ENCODE measurements at regions of chr17 and their contacts with region 1.

Region 1: GRCh38 chr17:7856883-7857723 is at the start of gene NAA38:
- DNase-seq: peak; percentile 89 to 98 (median 97)
- H3K4me3 ChIP-seq: peak within 1 kb of the TSS; percentile 79
- H3K4me3 Mint-ChIP-seq: no peak within 1 kb of the TSS
- H3K27ac ChIP-seq: peak within 1 kb of the TSS; percentile 81
- H3K27ac Mint-ChIP-seq: no peak within 1 kb of the TSS
- H3K4me1 ChIP-seq: peaks cover 24% of the 10 kb centered on the region
- H3K4me1 Mint-ChIP-seq: peaks cover 5 to 7% (median 5%) of the 10 kb centered on the region in 3 donors
- H3K27me3 ChIP-seq: no peaks in the 10 kb centered on the region
- H3K27me3 Mint-ChIP-seq: no peaks in the 10 kb centered on the region
- total RNA-seq, gene NAA38: 58.2 to 65.0 TPM

Region 2: DNA sequence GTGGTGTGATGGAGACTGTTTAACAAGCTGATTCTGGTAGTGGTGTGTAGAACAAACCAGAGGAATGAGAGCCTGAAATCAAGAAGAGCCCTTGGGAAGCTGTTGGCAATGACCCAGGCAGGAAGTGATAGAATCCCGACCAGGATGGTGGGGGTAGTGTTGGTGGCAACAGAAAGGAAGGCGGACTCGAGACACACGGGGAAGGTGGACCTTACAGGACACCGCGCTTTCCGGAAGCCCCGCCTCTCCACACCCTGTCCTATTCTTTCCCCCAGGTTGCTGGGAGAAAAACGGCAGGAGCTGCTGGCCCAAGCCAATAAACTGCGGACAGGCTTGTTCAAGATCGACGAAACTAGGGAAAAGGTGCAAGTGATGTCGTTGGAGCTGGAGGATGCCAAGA is 53.1 kb before region 1 on chr17:
- CTCF ChIA-PET with region 1: no interaction called
- POLR2A ChIA-PET with region 1: no interaction called
- DNase-seq: no peak
- H3K4me3 ChIP-seq: no peak overlapping the region
- H3K4me3 Mint-ChIP-seq: no peak overlapping the region
- H3K27ac ChIP-seq: no peak overlapping the region
- H3K27ac Mint-ChIP-seq: no peak overlapping the region
- H3K4me1 ChIP-seq: no peaks in the 10 kb centered on the region
- H3K4me1 Mint-ChIP-seq: no peaks in the 10 kb centered on the region
- H3K27me3 ChIP-seq: no peaks in the 10 kb centered on the region
- H3K27me3 Mint-ChIP-seq: peaks cover 29 to 43% of the 10 kb centered on the region in 2 donors

Region 3: DNA sequence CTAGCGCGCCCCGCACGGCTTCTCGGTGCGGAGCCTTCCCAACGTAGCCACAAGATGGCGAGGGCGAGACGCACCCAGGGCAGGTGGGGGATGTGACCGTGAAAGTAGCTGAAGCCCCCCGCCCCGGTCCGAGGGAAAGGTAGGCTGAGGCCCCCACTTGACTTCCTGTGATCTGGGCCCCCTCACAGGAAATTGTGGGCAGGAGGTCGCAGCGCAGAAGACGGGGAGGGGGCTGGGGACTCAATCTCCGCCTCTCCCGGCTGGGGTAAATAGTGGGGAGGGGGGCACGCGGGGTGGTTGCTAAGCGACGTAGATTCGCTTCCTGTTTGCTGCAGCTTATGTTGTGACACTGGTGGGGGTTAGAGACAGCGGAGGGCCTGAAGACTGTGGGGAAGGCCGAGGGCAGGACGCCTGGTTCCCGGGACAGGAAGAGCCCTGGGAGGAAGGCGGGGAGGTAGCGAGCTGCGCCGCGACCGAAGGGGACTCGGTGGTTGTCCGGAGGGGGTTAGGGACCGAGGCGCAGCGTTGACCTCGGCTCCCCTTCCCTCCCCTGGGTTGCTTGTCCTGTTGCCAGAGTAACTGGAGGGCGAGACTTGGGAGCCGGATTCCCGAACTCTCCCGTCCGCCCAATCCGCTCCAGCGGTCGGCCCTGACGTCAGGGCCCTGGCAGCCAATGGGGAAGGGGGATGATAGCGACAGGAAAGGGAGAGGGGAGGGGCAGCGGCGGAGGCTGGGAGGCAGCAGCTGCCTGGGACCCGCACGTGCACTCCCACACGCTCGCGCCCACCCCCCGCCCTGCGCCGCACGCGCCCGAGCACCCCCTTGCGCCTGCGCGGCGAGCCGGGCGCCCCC is 21.9 kb before region 1 on chr17:
- CTCF ChIA-PET with region 1: interaction called, 28 read pairs
- POLR2A ChIA-PET with region 1: interaction called, 46 read pairs
- DNase-seq: peak; percentile 88 to 96 (median 90)
- H3K4me3 ChIP-seq: peak overlapping the region; percentile 86
- H3K4me3 Mint-ChIP-seq: peak overlapping the region; percentile 90 to 100 (median 95)
- H3K27ac ChIP-seq: peak overlapping the region; percentile 98
- H3K27ac Mint-ChIP-seq: peak overlapping the region; percentile 99 to 100 (median 99)
- H3K4me1 ChIP-seq: peaks cover 44% of the 10 kb centered on the region
- H3K4me1 Mint-ChIP-seq: peaks cover 46 to 53% (median 48%) of the 10 kb centered on the region in 3 donors
- H3K27me3 ChIP-seq: peaks cover 5% of the 10 kb centered on the region
- H3K27me3 Mint-ChIP-seq: peaks cover 9% of the 10 kb centered on the region in 2 donors

Region 4: GRCh38 chr17:7844292-7845154 is 12.6 kb before region 1 on chr17:
- CTCF ChIA-PET with region 1: interaction called, 5 read pairs
- POLR2A ChIA-PET with region 1: interaction called, 15 read pairs
- DNase-seq: peak; percentile 75 to 88 (median 82)
- H3K4me3 ChIP-seq: peak overlapping the region; percentile 86
- H3K4me3 Mint-ChIP-seq: peak overlapping the region; percentile 84 to 99 (median 97)
- H3K27ac ChIP-seq: peak overlapping the region; percentile 99
- H3K27ac Mint-ChIP-seq: peak overlapping the region; percentile 97 to 100 (median 100)
- H3K4me1 ChIP-seq: peaks cover 35% of the 10 kb centered on the region
- H3K4me1 Mint-ChIP-seq: peaks cover 41 to 50% (median 43%) of the 10 kb centered on the region in 3 donors
- H3K27me3 ChIP-seq: no peaks in the 10 kb centered on the region
- H3K27me3 Mint-ChIP-seq: peaks cover 0 to 15% of the 10 kb centered on the region in 2 donors

Region 5: GRCh38 chr17:7885367-7886226 is 28.5 kb after region 1 on chr17:
- CTCF ChIA-PET with region 1: interaction called, 6 read pairs
- POLR2A ChIA-PET with region 1: interaction called, 11 read pairs
- DNase-seq: peak; percentile 24 to 71 (median 38)
- H3K4me3 ChIP-seq: peak overlapping the region; percentile 85
- H3K4me3 Mint-ChIP-seq: peak overlapping the region in 4 of 7 donors; percentile 37 to 57 (median 50)
- H3K27ac ChIP-seq: peak overlapping the region; percentile 79
- H3K27ac Mint-ChIP-seq: peak overlapping the region in 1 of 8 donors; percentile 10
- H3K4me1 ChIP-seq: peaks cover 63% of the 10 kb centered on the region
- H3K4me1 Mint-ChIP-seq: peaks cover 8 to 21% (median 11%) of the 10 kb centered on the region in 3 donors
- H3K27me3 ChIP-seq: no peaks in the 10 kb centered on the region
- H3K27me3 Mint-ChIP-seq: peaks cover 0 to 3% of the 10 kb centered on the region in 2 donors

Region 6: DNA sequence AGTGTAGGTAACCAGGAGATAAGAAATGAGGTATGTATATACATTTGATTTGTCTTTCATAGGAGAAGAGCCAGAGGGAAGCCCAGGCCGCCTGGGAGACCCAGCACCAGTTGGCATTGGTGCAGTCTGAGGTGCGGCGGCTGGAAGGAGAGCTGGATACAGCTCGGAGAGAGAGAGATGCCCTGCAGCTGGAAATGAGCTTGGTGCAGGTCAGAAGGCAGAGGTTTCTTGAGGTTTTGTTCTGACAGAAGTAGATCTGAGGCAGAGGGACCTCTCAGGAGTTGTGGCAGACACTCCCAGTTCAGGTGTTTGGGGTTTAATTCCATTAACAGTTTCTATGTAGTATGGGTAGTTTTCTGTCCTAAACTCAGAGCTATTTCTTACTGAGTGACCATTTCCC is 82.9 kb after region 1 on chr17:
- CTCF ChIA-PET with region 1: no interaction called
- POLR2A ChIA-PET with region 1: no interaction called
- DNase-seq: no peak
- H3K4me3 ChIP-seq: no peak overlapping the region
- H3K4me3 Mint-ChIP-seq: no peak overlapping the region
- H3K27ac ChIP-seq: no peak overlapping the region
- H3K27ac Mint-ChIP-seq: peak overlapping the region in 1 of 8 donors; percentile 27
- H3K4me1 ChIP-seq: no peaks in the 10 kb centered on the region
- H3K4me1 Mint-ChIP-seq: peaks cover 0 to 8% (median 0%) of the 10 kb centered on the region in 3 donors
- H3K27me3 ChIP-seq: no peaks in the 10 kb centered on the region
- H3K27me3 Mint-ChIP-seq: no peaks in the 10 kb centered on the region

Measured in CD8-positive, alpha-beta memory T cell (primary cell).